ENCODE measurements at regions of chr21 and their contacts with region 1.

Region 1: DNA sequence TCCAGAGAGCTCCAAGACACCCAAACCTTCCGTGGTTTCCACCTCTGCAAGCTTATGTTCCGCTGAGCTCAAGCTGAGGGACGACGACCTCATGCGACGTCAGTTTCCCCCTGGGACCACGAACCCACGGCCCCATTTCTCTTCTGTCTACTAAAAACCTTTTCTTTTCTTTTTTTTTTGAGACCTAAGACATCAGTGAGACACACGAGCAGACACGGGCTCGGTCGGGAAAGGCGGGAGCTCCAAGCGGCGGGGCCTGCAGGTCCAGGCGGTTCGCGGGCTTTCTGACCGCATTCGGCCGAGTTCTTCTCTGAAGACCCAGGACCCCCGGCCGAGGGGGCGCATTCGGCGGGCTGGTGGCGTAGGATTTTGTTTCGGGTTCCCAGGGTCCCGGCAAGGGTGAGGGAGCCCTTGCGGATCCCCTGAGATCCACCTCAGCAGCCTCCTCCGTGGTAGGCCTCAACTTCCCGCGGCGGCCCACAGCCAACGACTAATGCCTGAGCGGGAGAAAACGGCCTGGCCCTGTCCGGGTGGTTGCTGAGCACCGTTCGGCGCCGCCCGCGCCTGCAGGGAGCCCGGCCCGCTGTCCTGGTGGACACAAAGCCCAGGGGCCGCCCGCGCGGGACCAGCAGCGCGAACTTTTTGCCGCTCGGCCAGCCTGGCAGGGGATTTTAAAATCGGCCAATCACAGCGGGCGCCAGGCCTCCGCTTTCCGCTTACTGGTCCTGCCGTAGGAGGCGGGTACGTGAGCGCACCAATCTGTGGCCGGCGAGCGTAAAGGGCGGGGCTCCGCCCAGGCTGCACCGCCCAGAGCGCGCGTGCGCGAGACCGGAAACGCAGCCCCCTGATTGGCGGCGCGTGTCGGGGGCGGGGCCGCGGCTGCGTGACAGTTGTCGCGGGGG is at the start of gene C21orf58:
- DNase-seq: peak; percentile 97 to 98
- ATAC-seq: peak; percentile 94 to 98 (median 96)
- H3K4me3 ChIP-seq: peak within 1 kb of the TSS; percentile 81 to 100 (median 92)
- H3K27ac ChIP-seq: peak within 1 kb of the TSS; percentile 92 to 99 (median 97)
- H3K4me1 ChIP-seq: peaks cover 6 to 46% (median 28%) of the 10 kb centered on the region in 9 donors
- H3K27me3 ChIP-seq: no peaks in the 10 kb centered on the region
- CTCF ChIP-seq: no peak
- total RNA-seq, gene C21orf58: 0.98 to 2.0 (median 1.3) TPM

Region 2: GRCh38 chr21:45525153-45526025 is 798.1 kb before region 1 on chr21:
- intact Hi-C with region 1: no loop called
- DNase-seq: peak; percentile 44 to 83
- ATAC-seq: peak; percentile 36 to 90 (median 79)
- H3K4me3 ChIP-seq: no peak overlapping the region
- H3K27ac ChIP-seq: peak overlapping the region in 5 of 10 donors; percentile 22 to 62 (median 28)
- H3K4me1 ChIP-seq: peaks cover 0 to 5% (median 0%) of the 10 kb centered on the region in 9 donors
- H3K27me3 ChIP-seq: no peaks in the 10 kb centered on the region
- CTCF ChIP-seq: no peak

Region 3: DNA sequence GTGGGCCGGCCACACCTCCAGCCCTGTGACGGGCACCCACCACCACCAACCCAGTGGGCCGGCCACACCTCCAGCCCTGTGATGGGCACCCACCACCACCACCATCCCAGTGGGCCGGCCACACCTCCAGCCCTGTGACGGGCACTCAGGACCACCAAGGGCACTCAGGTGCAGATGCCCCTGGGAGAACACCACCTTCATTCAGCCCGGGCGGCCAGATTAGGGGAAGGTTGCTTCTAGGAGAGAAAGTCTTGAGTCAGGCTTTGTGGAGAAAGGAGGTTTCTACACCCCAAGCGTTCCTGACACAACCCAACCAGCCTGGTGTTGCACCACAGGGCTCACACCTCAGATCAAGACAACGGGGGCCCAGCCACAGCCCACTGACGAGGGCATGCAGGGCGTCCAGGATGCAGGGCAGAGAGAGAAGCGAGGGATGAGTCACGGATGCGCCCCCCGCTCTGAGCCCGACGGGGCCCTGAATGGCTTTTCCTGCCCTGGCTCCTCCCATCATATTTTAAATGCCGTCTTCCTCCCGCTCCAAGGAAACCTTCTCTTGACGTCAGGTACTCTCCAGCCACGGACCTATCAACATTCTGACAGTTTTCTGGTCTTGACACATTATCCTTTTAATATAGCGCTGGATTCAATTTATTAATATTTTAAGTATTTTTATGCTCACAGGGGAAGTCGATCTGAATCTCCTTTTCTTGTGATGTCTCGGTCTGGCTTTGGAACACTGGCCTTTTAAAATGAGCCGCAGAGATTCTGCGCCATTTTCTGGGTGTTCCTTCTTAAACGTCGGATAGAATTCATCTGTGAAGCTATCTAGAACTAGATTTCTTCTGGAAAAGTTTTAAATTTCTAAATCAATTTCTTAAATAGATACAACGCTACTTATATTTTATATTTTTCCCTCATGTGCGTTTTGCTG is 138.6 kb before region 1 on chr21:
- intact Hi-C with region 1: loop called in 1 of 10 experiments (anchors 10 kb)
- DNase-seq: peak; percentile 81 to 89
- ATAC-seq: peak in 7 of 8 donors; percentile 55 to 81 (median 74)
- H3K4me3 ChIP-seq: peak overlapping the region; percentile 52 to 85 (median 66)
- H3K27ac ChIP-seq: peak overlapping the region; percentile 65 to 97 (median 82)
- H3K4me1 ChIP-seq: peaks cover 14 to 36% (median 31%) of the 10 kb centered on the region in 9 donors
- H3K27me3 ChIP-seq: no peaks in the 10 kb centered on the region
- CTCF ChIP-seq: no peak

Region 4: DNA sequence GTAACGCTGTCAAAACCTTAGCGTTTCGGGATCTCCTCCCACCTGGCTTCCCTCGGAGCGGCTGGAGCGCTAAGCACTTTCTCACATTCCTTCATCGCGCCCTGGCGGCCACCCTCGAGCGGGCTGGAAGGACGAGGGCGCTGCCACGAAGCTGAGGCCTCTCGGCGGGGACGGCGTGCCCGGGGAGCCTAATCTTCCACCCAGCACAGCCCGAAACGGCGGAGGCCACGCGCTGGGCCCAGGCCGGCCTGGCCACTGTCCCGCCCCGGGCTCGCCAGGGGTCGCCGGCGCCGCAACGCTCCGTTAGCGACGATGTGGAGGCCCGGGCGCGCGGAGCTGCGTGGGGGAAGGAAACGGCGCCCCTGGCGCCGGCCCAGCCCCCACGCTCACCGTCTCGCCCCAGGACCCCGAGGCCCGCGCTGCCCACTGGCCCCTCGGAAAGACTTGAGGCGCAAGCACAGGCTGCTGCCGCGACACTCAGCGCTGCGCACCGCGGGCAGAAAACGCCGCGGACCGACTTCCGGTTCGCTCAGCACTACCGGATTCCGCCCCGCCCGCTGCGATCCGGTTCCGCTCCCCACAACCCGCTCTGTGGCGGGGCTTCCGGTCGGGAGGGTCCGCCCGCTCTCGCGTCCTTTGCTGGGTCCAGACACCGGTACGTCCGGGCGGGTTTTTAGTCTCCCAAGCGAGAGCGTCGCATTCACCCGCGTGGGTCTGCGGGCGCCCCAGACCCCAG is 37.5 kb before region 1 on chr21 and contains the start of gene YBEY:
- intact Hi-C with region 1: loop called in 5 of 10 experiments (anchors 1 to 5 kb)
- DNase-seq: peak; percentile 91
- ATAC-seq: peak; percentile 97 to 98 (median 98)
- H3K4me3 ChIP-seq: peak within 1 kb of the TSS; percentile 59 to 93 (median 82)
- H3K27ac ChIP-seq: peak within 1 kb of the TSS; percentile 89 to 98 (median 94)
- H3K4me1 ChIP-seq: peaks cover 22 to 69% (median 52%) of the 10 kb centered on the region in 9 donors
- H3K27me3 ChIP-seq: no peaks in the 10 kb centered on the region
- CTCF ChIP-seq: peak in 8 of 9 donors; percentile 7 to 62 (median 38)
- total RNA-seq, gene YBEY: 11.9 to 25.7 (median 16.7) TPM

Region 5: DNA sequence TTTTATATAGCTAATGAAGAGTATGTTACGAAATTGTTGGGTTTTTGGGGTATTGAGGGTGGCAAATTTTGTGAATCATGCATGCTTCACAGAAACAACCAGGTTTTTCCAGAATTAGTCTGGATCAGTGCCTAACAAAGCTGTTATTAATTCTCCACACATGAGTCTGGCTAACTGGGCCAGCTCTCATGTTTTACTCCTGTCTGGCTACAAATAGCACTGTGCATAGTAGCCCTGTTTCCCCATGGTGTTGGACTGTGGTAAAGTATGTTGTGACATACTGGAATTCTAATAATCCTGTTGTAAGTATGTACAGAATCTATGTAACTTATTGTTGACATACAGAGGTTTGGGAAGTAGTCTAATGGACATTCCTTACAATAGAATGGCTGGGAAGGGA is 245.6 kb after region 1 on chr21:
- intact Hi-C with region 1: no loop called
- DNase-seq: no peak
- ATAC-seq: no peak
- H3K4me3 ChIP-seq: no peak overlapping the region
- H3K27ac ChIP-seq: peak overlapping the region in 2 of 10 donors; percentile 57
- H3K4me1 ChIP-seq: peaks cover 0 to 11% (median 6%) of the 10 kb centered on the region in 9 donors
- H3K27me3 ChIP-seq: no peaks in the 10 kb centered on the region
- CTCF ChIP-seq: no peak